GM12878 (cell line): ENCODE measurements at regions of chr10 and their contacts with region 1.

Region 1: GRCh38 chr10:133309111-133309719 is 501 bp downstream of the ZNF511 start:
- DNase-seq: peak; percentile 39
- ATAC-seq: peak; percentile 86
- H3K4me3 ChIP-seq: peak overlapping the region; percentile 95
- H3K27ac ChIP-seq: peak overlapping the region; percentile 95
- H3K4me1 ChIP-seq: peaks cover 19% of the 10 kb centered on the region
- H3K27me3 ChIP-seq: no peaks in the 10 kb centered on the region
- CTCF ChIP-seq: no peak
- EP300 ChIP-seq: no peak
- POLR2A ChIP-seq: no peak
- RAD21 ChIP-seq: no peak

Region 2: GRCh38 chr10:133139551-133140065 is 169.6 kb before region 1 on chr10:
- CTCF ChIA-PET with region 1: interaction called, 4 read pairs
- POLR2A ChIA-PET with region 1: no interaction called
- RAD21 ChIA-PET with region 1: no interaction called
- SMC1A ChIA-PET with region 1: interaction called, 3 read pairs
- in situ Hi-C with region 1: loop called (anchors 5 kb)
- intact Hi-C with region 1: loop called (anchors 2 kb)
- DNase-seq: no peak
- ATAC-seq: no peak
- H3K4me3 ChIP-seq: no peak overlapping the region
- H3K27ac ChIP-seq: no peak overlapping the region
- H3K4me1 ChIP-seq: no peaks in the 10 kb centered on the region
- H3K27me3 ChIP-seq: no peaks in the 10 kb centered on the region
- CTCF ChIP-seq: no peak
- EP300 ChIP-seq: no peak
- POLR2A ChIP-seq: no peak
- RAD21 ChIP-seq: no peak

Region 3: DNA sequence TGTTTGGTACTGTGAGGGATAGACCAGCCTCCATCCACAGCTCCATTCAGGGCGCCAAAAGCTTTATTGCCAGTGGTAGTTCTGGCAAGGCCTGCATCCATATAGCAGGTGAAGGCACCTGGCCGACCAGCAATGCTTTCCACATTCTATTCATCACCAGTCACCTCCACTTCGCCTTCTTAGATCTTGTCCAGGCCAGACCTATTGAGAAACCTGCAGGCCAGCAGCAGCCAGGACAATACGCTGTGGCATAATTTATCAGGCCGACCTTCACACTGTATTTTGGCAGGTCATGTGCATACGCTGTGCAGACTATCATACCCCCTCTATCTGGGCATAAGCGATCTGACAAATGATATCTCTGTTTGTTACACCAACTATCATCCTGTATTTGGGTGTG is 164.4 kb before region 1 on chr10:
- CTCF ChIA-PET with region 1: interaction called, 4 read pairs
- POLR2A ChIA-PET with region 1: no interaction called
- RAD21 ChIA-PET with region 1: no interaction called
- SMC1A ChIA-PET with region 1: interaction called, 3 read pairs
- in situ Hi-C with region 1: loop called (anchors 5 kb)
- intact Hi-C with region 1: loop called (anchors 2 kb)
- DNase-seq: no peak
- ATAC-seq: no peak
- H3K4me3 ChIP-seq: no peak overlapping the region
- H3K27ac ChIP-seq: no peak overlapping the region
- H3K4me1 ChIP-seq: no peaks in the 10 kb centered on the region
- H3K27me3 ChIP-seq: no peaks in the 10 kb centered on the region
- CTCF ChIP-seq: no peak
- EP300 ChIP-seq: no peak
- POLR2A ChIP-seq: no peak
- RAD21 ChIP-seq: no peak

Region 4: GRCh38 chr10:133214468-133215410 is 94.5 kb before region 1 on chr10:
- CTCF ChIA-PET with region 1: no interaction called
- POLR2A ChIA-PET with region 1: no interaction called
- RAD21 ChIA-PET with region 1: no interaction called
- SMC1A ChIA-PET with region 1: no interaction called
- in situ Hi-C with region 1: no loop called
- intact Hi-C with region 1: no loop called
- DNase-seq: no peak
- ATAC-seq: no peak
- H3K4me3 ChIP-seq: no peak overlapping the region
- H3K27ac ChIP-seq: no peak overlapping the region
- H3K4me1 ChIP-seq: no peaks in the 10 kb centered on the region
- H3K27me3 ChIP-seq: no peaks in the 10 kb centered on the region
- CTCF ChIP-seq: no peak
- EP300 ChIP-seq: no peak
- POLR2A ChIP-seq: no peak
- RAD21 ChIP-seq: no peak

Region 5: GRCh38 chr10:133257489-133258065 is 51.6 kb before region 1 on chr10:
- CTCF ChIA-PET with region 1: interaction called, 12 read pairs
- POLR2A ChIA-PET with region 1: no interaction called
- RAD21 ChIA-PET with region 1: no interaction called
- SMC1A ChIA-PET with region 1: interaction called, 7 read pairs
- in situ Hi-C with region 1: no loop called
- intact Hi-C with region 1: no loop called
- DNase-seq: no peak
- ATAC-seq: peak; percentile 13
- H3K4me3 ChIP-seq: no peak overlapping the region
- H3K27ac ChIP-seq: no peak overlapping the region
- H3K4me1 ChIP-seq: peaks cover 30% of the 10 kb centered on the region
- H3K27me3 ChIP-seq: no peaks in the 10 kb centered on the region
- CTCF ChIP-seq: peak; percentile 26 to 50 (median 27); a peak in 4 of 6 replicates
- EP300 ChIP-seq: no peak
- POLR2A ChIP-seq: no peak
- RAD21 ChIP-seq: peak; percentile 44; the same call in 1 of the 2 replicates

Region 6: DNA sequence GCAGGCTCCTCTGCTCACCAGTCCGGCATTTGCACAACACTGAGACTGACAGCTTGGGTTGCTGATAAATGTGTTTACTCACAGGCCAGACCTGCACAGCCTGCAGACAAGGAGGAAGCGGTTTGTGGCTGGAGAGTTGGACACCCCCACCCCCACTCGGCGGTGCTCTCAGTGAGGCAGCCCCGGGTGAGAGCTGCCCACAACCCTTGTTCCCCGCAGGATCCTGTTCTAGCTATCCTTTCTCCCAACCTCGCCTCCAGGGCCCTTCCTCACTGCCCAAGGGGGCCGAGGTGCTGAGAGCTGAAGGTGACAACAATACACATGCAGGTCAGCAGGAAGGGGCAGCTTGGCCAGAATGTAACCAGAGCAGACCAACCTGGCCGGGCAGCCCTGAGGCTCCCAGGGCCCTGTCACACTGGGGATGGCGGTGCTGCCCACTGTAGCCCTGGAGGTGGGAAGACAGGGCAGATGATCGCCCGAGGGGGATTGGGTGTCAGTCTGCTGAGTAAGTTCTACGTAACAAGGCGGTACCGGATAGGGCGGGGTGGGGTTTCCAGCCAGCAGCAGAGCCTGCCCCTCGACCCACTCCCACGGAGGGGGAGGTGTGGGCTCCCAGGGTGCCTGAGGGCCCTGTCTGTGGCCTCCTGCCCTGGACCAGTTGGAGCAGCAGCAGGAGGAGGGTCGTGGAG is 30.5 kb before region 1 on chr10:
- CTCF ChIA-PET with region 1: interaction called, 15 read pairs
- POLR2A ChIA-PET with region 1: interaction called, 3 read pairs
- RAD21 ChIA-PET with region 1: interaction called, 4 read pairs
- SMC1A ChIA-PET with region 1: interaction called, 5 read pairs
- in situ Hi-C with region 1: no loop called
- intact Hi-C with region 1: loop called (anchors 2 kb)
- DNase-seq: no peak
- ATAC-seq: peak; percentile 29
- H3K4me3 ChIP-seq: no peak overlapping the region
- H3K27ac ChIP-seq: peak overlapping the region; percentile 53
- H3K4me1 ChIP-seq: peaks cover 33% of the 10 kb centered on the region
- H3K27me3 ChIP-seq: no peaks in the 10 kb centered on the region
- CTCF ChIP-seq: no peak
- EP300 ChIP-seq: peak in 1 of 2 experiments; percentile 44; a peak in 1 of 4 replicates
- POLR2A ChIP-seq: no peak; the same call in 1 of the 2 replicates
- RAD21 ChIP-seq: no peak

Region 7: DNA sequence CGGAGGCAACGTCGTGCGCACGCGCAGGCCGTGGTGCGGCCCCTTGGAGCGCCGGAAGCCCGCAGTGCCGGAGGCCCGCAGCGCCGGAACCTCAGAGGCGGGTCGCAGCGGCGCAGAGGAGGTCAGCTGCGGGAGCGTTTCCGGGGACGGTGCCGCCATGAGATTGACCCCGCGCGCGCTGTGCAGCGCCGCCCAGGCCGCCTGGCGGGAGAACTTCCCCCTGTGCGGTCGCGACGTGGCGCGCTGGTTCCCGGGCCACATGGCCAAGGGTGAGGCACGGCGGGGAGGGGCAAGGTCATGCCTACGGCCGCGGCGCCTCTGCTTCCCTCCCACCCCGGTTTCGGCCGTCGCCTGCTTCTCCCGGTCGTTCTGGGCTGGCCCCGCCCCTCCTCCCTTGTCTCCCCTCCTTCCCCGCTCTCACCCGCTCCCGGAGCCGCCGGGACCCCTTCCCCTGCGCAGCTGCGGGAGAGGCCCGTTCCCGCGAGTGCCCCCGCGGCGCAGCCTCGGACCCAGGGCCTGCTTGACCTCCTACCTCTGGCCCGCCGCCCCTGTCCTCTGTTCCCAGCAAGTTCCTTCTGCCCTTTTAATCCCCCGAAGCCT is 84.9 kb after region 1 on chr10 and contains the start of gene MTG1:
- CTCF ChIA-PET with region 1: interaction called, 3 read pairs
- POLR2A ChIA-PET with region 1: no interaction called
- RAD21 ChIA-PET with region 1: no interaction called
- SMC1A ChIA-PET with region 1: no interaction called
- in situ Hi-C with region 1: no loop called
- intact Hi-C with region 1: loop called (anchors 5 kb)
- DNase-seq: peak; percentile 65
- ATAC-seq: peak; percentile 85
- H3K4me3 ChIP-seq: peak within 1 kb of the TSS; percentile 80
- H3K27ac ChIP-seq: peak within 1 kb of the TSS; percentile 95
- H3K4me1 ChIP-seq: peaks cover 39% of the 10 kb centered on the region
- H3K27me3 ChIP-seq: no peaks in the 10 kb centered on the region
- CTCF ChIP-seq: peak in 1 of 3 experiments; percentile 16; a peak in 1 of 6 replicates
- EP300 ChIP-seq: peak; percentile 13 to 33; a peak in 1 of 4 replicates
- POLR2A ChIP-seq: peak; percentile 91
- RAD21 ChIP-seq: no peak
- polyA plus RNA-seq, gene MTG1: 6.2 to 9.2 TPM